GM12878 (cell line): ENCODE measurements at regions of chr3 and their contacts with region 1.

Region 1: DNA sequence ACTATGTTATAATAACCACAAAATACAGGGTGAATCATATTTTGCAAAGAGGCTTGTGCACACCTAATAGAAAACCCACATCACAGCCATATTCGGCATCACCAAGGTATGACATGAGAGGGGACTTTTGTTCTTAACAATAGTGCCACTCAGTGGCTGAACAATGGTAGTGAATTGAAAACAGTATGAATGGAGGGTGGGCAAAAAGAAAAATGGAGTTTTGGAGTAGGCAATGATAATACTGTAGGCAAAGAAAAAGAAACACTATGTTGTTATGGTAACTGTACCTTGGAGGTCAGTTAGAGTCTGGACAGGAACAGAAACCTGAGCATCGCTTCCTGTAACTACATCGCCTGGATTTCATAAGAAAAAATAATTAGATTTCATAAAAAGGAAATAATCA is 348.6 kb downstream of the PLCL2 start:
- DNase-seq: peak; percentile 51
- ATAC-seq: peak; percentile 99
- H3K4me3 ChIP-seq: no peak overlapping the region
- H3K27ac ChIP-seq: no peak overlapping the region
- H3K4me1 ChIP-seq: peaks cover 12% of the 10 kb centered on the region; the same call in 1 of the 2 replicates
- H3K27me3 ChIP-seq: no peaks in the 10 kb centered on the region
- CTCF ChIP-seq: peak; percentile 50 to 77 (median 65); a peak in 5 of 6 replicates
- EP300 ChIP-seq: no peak
- POLR2A ChIP-seq: no peak
- RAD21 ChIP-seq: peak; percentile 99

Region 2: DNA sequence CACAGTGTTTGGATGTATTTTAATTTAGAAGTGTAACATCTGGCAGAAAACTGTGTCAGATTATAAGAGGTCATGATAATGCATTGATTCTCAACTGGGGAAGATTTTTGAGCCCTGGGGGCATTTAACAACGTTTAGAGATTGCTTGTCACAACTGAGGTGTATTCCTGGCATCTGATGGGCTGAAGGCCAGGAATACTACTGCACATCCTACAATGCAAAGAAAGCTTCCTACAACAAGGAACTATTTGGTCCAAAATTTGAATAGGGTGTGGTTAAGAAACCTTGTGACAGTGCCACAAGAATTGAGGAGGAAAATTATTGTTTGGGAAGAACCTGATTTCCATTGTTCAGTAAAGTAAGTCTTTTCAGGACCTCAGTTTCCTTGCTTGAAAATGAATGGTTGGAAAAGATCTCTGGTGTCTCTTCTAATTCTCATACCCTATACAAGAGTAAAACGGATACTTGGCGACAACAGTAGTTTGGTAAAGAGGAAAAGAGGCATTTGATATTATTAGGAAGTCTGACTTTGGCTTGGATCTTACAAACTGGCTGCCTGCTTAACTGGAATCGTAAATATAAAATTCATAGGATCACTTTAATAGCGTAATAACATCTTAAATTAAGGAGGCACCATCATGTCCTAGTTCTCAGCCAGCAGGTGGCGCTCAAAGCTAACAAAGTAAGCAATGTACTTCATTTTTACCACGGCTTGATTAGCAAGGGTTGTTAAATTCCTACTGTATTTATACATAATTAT is 632.4 kb before region 1 on chr3:
- CTCF ChIA-PET with region 1: interaction called, 114 read pairs
- POLR2A ChIA-PET with region 1: no interaction called
- RAD21 ChIA-PET with region 1: interaction called, 30 read pairs
- SMC1A ChIA-PET with region 1: interaction called, 77 read pairs
- in situ Hi-C with region 1: loop called (anchors 5 kb)
- intact Hi-C with region 1: loop called (anchors 1 kb)
- DNase-seq: no peak
- ATAC-seq: peak; percentile 86
- H3K4me3 ChIP-seq: no peak overlapping the region
- H3K27ac ChIP-seq: no peak overlapping the region
- H3K4me1 ChIP-seq: peaks cover 7% of the 10 kb centered on the region
- H3K27me3 ChIP-seq: no peaks in the 10 kb centered on the region
- CTCF ChIP-seq: peak; percentile 56 to 81 (median 69)
- EP300 ChIP-seq: no peak
- POLR2A ChIP-seq: no peak
- RAD21 ChIP-seq: peak; percentile 96

Region 3: GRCh38 chr3:16828815-16829214 is 404.6 kb before region 1 on chr3:
- CTCF ChIA-PET with region 1: interaction called, 14 read pairs
- POLR2A ChIA-PET with region 1: no interaction called
- RAD21 ChIA-PET with region 1: interaction called, 33 read pairs
- SMC1A ChIA-PET with region 1: interaction called, 10 read pairs
- in situ Hi-C with region 1: loop called (anchors 5 kb)
- intact Hi-C with region 1: loop called (anchors 1 kb)
- DNase-seq: no peak
- ATAC-seq: peak; percentile 90
- H3K4me3 ChIP-seq: no peak overlapping the region
- H3K27ac ChIP-seq: no peak overlapping the region
- H3K4me1 ChIP-seq: peaks cover 8% of the 10 kb centered on the region
- H3K27me3 ChIP-seq: no peaks in the 10 kb centered on the region
- CTCF ChIP-seq: peak; percentile 58 to 65 (median 60)
- EP300 ChIP-seq: no peak
- POLR2A ChIP-seq: no peak
- RAD21 ChIP-seq: peak; percentile 93

Region 4: GRCh38 chr3:17032407-17033034 is 200.9 kb before region 1 on chr3:
- CTCF ChIA-PET with region 1: interaction called, 4 read pairs
- POLR2A ChIA-PET with region 1: no interaction called
- RAD21 ChIA-PET with region 1: interaction called, 6 read pairs
- SMC1A ChIA-PET with region 1: interaction called, 8 read pairs
- in situ Hi-C with region 1: no loop called
- intact Hi-C with region 1: loop called (anchors 5 kb)
- DNase-seq: no peak
- ATAC-seq: peak; percentile 81
- H3K4me3 ChIP-seq: no peak overlapping the region
- H3K27ac ChIP-seq: no peak overlapping the region
- H3K4me1 ChIP-seq: peaks cover 15% of the 10 kb centered on the region
- H3K27me3 ChIP-seq: no peaks in the 10 kb centered on the region
- CTCF ChIP-seq: peak; percentile 54 to 64 (median 54); a peak in 5 of 6 replicates
- EP300 ChIP-seq: no peak
- POLR2A ChIP-seq: no peak
- RAD21 ChIP-seq: peak; percentile 76

Region 5: DNA sequence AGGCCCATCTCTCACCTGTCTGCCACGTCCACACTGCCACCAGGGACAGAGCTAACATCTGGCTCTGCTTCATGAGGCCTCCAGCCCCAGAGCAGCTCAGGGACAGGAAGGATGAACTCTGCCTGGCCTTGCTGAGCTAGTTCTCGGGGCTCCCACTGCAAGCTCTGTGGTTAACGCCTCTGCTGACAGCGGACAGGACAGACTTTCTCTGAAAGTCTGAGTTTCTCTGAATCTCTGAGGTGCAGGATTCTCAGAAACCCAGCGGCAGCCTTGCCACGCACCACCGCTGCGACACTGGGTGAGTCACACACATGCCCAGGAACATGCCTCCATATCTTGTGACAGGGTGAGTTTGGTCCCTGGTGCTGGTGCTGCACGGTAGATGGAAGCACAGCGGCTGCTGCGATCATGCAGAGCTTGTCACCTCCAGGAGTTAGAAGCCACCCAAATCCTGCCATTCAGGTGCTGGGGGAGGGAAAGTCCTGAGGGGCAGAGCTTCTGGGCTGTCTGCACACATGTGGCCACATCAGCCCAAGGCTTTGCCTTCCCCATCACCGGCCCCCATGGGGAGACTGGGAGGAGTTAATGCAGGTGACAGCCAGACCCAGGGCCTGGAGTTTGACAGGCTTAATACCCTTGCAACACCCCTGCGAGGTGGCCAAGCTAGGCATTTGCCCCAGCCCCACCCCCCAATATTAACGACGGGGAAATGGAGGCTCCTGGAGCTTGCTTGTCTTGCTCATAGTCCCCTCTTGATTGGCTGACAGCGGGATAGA is 81.6 kb before region 1 on chr3:
- CTCF ChIA-PET with region 1: interaction called, 13 read pairs
- POLR2A ChIA-PET with region 1: no interaction called
- RAD21 ChIA-PET with region 1: interaction called, 18 read pairs
- SMC1A ChIA-PET with region 1: interaction called, 25 read pairs
- in situ Hi-C with region 1: no loop called
- intact Hi-C with region 1: loop called (anchors 1 kb)
- DNase-seq: peak; percentile 92
- ATAC-seq: peak; percentile 96
- H3K4me3 ChIP-seq: 0 out of 2 replicates have a peak overlapping the region, but pooled peaks have one; percentile 1
- H3K27ac ChIP-seq: peak overlapping the region; percentile 76
- H3K4me1 ChIP-seq: peaks cover 25% of the 10 kb centered on the region
- H3K27me3 ChIP-seq: no peaks in the 10 kb centered on the region
- CTCF ChIP-seq: 0 out of 6 replicates have a peak, but pooled peaks of 1 of the 3 experiments have one; percentile 1
- EP300 ChIP-seq: peak; percentile 73 to 82
- POLR2A ChIP-seq: peak; percentile 67; the same call in 1 of the 2 replicates
- RAD21 ChIP-seq: peak; percentile 32

Region 6: DNA sequence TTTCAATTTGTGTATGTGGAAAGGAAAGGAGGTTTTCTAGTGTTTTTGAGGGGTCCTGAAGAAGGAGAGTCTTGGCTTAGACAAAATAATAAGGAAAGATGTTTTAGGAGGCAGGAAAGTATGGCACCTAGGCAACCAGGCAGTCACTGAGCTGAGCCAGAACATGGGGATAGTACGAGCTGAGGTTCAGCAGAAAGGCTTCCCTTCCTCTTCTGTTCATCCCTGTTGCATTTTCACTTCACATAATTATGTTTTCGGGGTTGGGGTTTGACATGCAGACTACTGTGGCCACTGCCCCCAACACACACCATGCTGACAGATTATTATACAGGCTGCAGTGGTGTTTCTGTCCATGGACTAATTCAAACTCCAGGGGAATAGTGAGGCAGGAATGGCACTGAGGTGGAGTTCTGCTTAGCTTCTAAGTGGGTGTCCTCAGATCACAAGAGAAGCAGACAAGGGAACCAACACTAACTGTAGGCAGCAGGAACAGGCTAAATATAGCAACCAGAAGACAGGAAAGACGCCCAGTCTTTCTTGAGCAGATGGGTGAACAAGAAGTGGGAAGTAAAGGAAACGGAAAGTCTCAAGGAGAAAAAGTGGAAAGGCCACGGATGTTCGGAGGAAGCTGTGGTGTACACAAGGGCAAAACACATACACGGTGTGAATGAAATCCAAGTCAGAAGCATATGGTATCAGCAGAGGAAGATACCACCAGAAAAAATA is 42.9 kb before region 1 on chr3:
- CTCF ChIA-PET with region 1: interaction called, 98 read pairs
- POLR2A ChIA-PET with region 1: interaction called, 3 read pairs
- RAD21 ChIA-PET with region 1: interaction called, 30 read pairs
- SMC1A ChIA-PET with region 1: interaction called, 65 read pairs
- in situ Hi-C with region 1: no loop called
- intact Hi-C with region 1: loop called (anchors 1 kb)
- DNase-seq: no peak
- ATAC-seq: 0 out of 3 replicates have a peak, but pooled peaks have one; percentile 12
- H3K4me3 ChIP-seq: no peak overlapping the region
- H3K27ac ChIP-seq: no peak overlapping the region
- H3K4me1 ChIP-seq: peaks cover 23% of the 10 kb centered on the region
- H3K27me3 ChIP-seq: no peaks in the 10 kb centered on the region
- CTCF ChIP-seq: no peak
- EP300 ChIP-seq: no peak
- POLR2A ChIP-seq: no peak
- RAD21 ChIP-seq: no peak

Region 7: GRCh38 chr3:17518189-17519059 is 285.0 kb after region 1 on chr3:
- CTCF ChIA-PET with region 1: no interaction called
- POLR2A ChIA-PET with region 1: no interaction called
- RAD21 ChIA-PET with region 1: no interaction called
- SMC1A ChIA-PET with region 1: no interaction called
- in situ Hi-C with region 1: no loop called
- intact Hi-C with region 1: no loop called
- DNase-seq: no peak
- ATAC-seq: no peak
- H3K4me3 ChIP-seq: no peak overlapping the region
- H3K27ac ChIP-seq: no peak overlapping the region
- H3K4me1 ChIP-seq: no peaks in the 10 kb centered on the region
- H3K27me3 ChIP-seq: no peaks in the 10 kb centered on the region
- CTCF ChIP-seq: no peak
- EP300 ChIP-seq: no peak
- POLR2A ChIP-seq: no peak
- RAD21 ChIP-seq: no peak